ENCODE measurements at regions of chr9 and their contacts with region 1.

Region 1: GRCh38 chr9:114207034-114207810 is 51.9 kb downstream of the COL27A1 start:
- DNase-seq: no peak
- H3K4me3 ChIP-seq: no peak overlapping the region
- H3K27ac ChIP-seq: no peak overlapping the region
- H3K4me1 ChIP-seq: peaks cover 0 to 24% (median 6%) of the 10 kb centered on the region in 4 experiments; a peak in 6 of 7 replicates
- H3K27me3 ChIP-seq: no peaks in the 10 kb centered on the region
- CTCF ChIP-seq: no peak
- EP300 ChIP-seq: no peak
- POLR2A ChIP-seq: no peak
- RAD21 ChIP-seq: no peak

Region 2: GRCh38 chr9:114117996-114118830 is 89.0 kb before region 1 on chr9:
- CTCF ChIA-PET with region 1: no interaction called
- POLR2A ChIA-PET with region 1: no interaction called
- DNase-seq: no peak
- H3K4me3 ChIP-seq: no peak overlapping the region
- H3K27ac ChIP-seq: no peak overlapping the region
- H3K4me1 ChIP-seq: peaks cover 0 to 4% (median 1%) of the 10 kb centered on the region in 4 experiments; a peak in 3 of 7 replicates
- H3K27me3 ChIP-seq: peaks cover 0 to 2% (median 1%) of the 10 kb centered on the region in 4 experiments; a peak in 2 of 7 replicates
- CTCF ChIP-seq: no peak
- EP300 ChIP-seq: no peak
- POLR2A ChIP-seq: no peak
- RAD21 ChIP-seq: no peak

Region 3: GRCh38 chr9:114196979-114197622 is 10.1 kb before region 1 on chr9:
- CTCF ChIA-PET with region 1: interaction called, 10 read pairs
- POLR2A ChIA-PET with region 1: interaction called, 3 read pairs
- DNase-seq: no peak
- H3K4me3 ChIP-seq: no peak overlapping the region
- H3K27ac ChIP-seq: no peak overlapping the region
- H3K4me1 ChIP-seq: no peaks in the 10 kb centered on the region; a peak in 1 of 7 replicates
- H3K27me3 ChIP-seq: peaks cover 0 to 2% (median 0%) of the 10 kb centered on the region in 4 experiments; a peak in 1 of 7 replicates
- CTCF ChIP-seq: no peak
- EP300 ChIP-seq: no peak
- POLR2A ChIP-seq: no peak
- RAD21 ChIP-seq: no peak